ENCODE measurements at regions of chr12 and their contacts with region 1.

Region 1: DNA sequence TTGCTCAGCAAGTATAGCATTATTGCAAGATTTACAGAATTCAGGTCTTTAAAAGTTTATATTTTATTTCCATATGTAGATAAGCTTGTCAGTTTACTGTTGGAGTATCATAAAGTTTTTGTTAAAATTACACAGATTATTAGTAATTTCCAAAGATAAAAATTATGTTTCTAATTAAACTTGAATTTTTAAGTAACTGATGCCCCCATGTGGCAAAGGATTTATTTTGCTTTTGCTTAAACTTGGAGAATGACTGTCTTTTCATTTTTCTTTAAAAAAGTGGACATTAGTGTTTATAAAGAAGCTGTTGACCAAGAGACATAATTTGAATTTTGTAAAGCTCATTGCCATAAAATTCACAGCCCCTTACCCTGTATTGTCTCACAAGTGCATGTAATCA is 45.8 kb downstream of the ETNK1 start:
- DNase-seq: no peak
- H3K4me3 ChIP-seq: no peak overlapping the region
- H3K27ac ChIP-seq: no peak overlapping the region
- H3K27me3 ChIP-seq: no peaks in the 10 kb centered on the region
- CTCF ChIP-seq: no peak

Region 2: GRCh38 chr12:22653075-22653474 is 17.7 kb before region 1 on chr12:
- CTCF ChIA-PET with region 1: interaction called, 11 read pairs
- POLR2A ChIA-PET with region 1: no interaction called
- DNase-seq: no peak
- H3K4me3 ChIP-seq: no peak overlapping the region
- H3K27ac ChIP-seq: no peak overlapping the region
- H3K27me3 ChIP-seq: no peaks in the 10 kb centered on the region
- CTCF ChIP-seq: no peak

Region 3: GRCh38 chr12:22684140-22685118 is 13.7 kb after region 1 on chr12:
- CTCF ChIA-PET with region 1: interaction called, 19 read pairs
- POLR2A ChIA-PET with region 1: no interaction called
- DNase-seq: no peak
- H3K4me3 ChIP-seq: no peak overlapping the region
- H3K27ac ChIP-seq: no peak overlapping the region
- H3K27me3 ChIP-seq: no peaks in the 10 kb centered on the region
- CTCF ChIP-seq: peak; percentile 62